Right ventricle myocardium inferior (tissue), 1 donor: ENCODE measurements at regions of chr4 and their contacts with region 1.

Region 1: DNA sequence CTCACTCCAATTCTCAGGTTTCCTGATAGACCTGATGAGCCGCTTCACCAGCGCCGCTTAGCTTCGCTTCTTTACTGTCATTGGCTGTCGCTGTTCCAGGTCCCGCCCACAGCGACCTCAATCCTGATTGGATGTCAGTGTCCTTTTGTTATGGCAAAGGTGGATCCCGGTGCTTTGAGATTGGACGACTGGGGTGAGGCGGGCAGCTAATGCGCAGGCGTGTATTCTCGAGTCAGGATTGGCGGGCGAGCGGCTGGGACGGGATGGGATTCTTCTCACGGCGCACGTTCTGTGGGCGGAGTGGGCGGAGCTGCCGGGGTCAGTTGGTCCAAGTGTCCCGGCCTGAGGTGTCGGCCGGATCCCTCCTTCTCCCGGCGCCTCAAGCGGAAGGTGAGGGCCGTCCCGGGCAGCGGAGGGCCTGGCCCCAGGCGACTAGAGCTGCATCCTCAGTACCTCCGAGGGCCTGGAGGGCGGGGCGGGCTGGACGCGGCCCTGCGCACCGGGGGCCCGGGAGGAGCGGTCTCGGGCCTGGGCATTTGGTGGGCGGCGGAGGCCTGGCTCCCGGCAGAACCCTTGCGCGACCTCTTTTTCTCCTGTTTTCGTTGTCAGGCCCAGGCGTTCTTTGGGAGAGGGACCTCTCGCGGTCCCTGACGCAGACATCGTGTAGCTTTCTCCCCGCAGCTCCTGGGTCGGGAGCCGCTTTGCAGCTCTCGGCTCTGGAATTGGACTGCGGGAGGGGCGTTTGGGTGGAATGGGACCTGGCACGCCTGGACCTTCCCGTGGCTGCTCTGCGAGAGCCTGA is at the start of gene SCOC:
- DNase-seq: peak; percentile 98
- ATAC-seq: peak; percentile 99
- total RNA-seq, gene SCOC: 75.3 TPM

Region 2: DNA sequence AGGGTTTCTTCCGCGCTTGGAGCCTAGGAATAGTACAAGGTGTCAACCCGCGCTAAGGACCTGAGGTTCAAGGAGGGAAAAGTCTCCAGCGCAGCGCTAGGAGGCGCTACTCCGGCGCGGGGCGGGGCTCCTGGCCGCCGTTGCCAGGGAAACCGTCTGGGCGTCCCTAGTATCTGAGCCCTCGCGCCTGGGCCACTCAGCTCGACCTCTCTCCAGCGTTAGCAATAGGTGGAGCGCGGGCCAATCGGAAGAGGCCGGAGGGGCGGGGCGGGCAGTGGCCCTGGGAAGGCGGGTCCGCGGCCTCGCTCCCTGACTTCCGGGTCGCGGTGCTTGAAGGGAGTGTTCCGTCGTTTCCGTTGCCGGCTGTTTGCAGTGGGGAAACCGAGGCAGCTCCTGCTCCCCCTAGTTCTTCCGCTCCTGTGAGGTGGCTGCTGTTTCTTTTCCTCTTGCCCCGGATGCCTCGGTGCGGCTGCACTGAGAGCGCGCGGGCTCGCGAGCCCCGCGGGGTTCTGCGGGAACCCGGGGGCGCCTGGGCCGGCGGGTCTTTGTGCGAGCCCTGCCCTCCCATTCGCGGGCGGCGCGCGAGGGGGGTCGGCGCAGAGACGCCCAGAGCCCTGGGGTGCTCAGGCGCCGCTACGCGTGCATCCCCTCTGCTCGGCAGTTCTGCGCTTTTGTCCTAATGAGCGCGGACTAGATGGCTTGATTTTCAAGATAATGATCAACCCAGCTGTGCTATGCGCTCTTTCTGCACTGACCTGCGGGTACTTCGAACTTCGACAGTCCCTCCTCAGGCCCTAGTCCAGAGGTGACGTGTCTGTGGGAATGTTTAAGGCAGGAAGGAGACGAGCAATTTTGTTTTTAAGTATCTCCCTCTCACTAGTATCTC is 150.6 kb after region 1 on chr4 and contains the start of gene ELMOD2:
- intact Hi-C with region 1: loop called (anchors 2 kb)
- DNase-seq: peak; percentile 100
- ATAC-seq: peak; percentile 100
- total RNA-seq, gene ELMOD2: 14.6 TPM